ENCODE measurements at regions of chr2 and their contacts with region 1.

Region 1: GRCh38 chr2:3447789-3448317 is 68.4 kb downstream of the TRAPPC12 start:
- DNase-seq: no peak
- H3K4me3 ChIP-seq: no peak overlapping the region
- H3K27ac ChIP-seq: no peak overlapping the region
- H3K4me1 ChIP-seq: no peaks in the 10 kb centered on the region
- H3K27me3 ChIP-seq: no peaks in the 10 kb centered on the region
- CTCF ChIP-seq: no peak

Region 2: GRCh38 chr2:3465844-3466481 is 18.1 kb after region 1 on chr2:
- CTCF ChIA-PET with region 1: interaction called, 13 read pairs
- POLR2A ChIA-PET with region 1: no interaction called
- intact Hi-C with region 1: no loop called
- DNase-seq: peak; percentile 26 to 81
- H3K4me3 ChIP-seq: no peak overlapping the region
- H3K27ac ChIP-seq: no peak overlapping the region
- H3K4me1 ChIP-seq: peaks cover 14% of the 10 kb centered on the region
- H3K27me3 ChIP-seq: no peaks in the 10 kb centered on the region
- CTCF ChIP-seq: no peak

Region 3: GRCh38 chr2:3738454-3738853 is 290.6 kb after region 1 on chr2:
- CTCF ChIA-PET with region 1: no interaction called
- POLR2A ChIA-PET with region 1: no interaction called
- intact Hi-C with region 1: no loop called
- DNase-seq: peak in 1 of 2 experiments; percentile 39
- H3K4me3 ChIP-seq: no peak overlapping the region
- H3K27ac ChIP-seq: no peak overlapping the region
- H3K4me1 ChIP-seq: no peaks in the 10 kb centered on the region
- H3K27me3 ChIP-seq: peaks cover 91% of the 10 kb centered on the region
- CTCF ChIP-seq: peak; percentile 53; the same call in 1 of the 2 replicates